ENCODE measurements at regions of chr2 and their contacts with region 1.

Region 1: DNA sequence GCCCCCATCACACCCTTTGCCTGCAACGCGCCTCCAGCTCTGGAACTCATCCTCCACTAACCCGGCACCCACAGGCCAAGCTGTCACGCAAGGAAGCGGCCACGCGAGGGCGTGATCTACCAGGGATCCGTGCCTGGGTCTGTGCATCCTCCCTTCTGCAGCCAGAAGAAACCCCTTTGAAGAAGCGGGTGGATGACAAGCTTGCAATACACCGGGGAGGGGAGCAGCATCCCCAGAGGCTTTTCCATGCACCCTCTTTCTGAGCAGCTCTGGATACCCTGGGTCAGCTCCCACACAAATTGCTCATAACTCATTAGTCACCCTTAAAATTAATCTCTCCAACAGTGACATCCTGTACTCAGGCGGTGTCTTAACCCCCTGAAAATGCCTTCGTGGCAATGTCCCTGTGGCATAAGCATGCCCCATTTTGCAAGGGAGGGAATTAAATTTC is 47.6 kb downstream of the PDCL3 start:
- DNase-seq: peak; percentile 65 to 87 (median 86)
- ATAC-seq: peak; percentile 64 to 78
- H3K4me3 ChIP-seq: no peak overlapping the region
- H3K27ac ChIP-seq: no peak overlapping the region
- H3K4me1 ChIP-seq: no peaks in the 10 kb centered on the region
- H3K27me3 ChIP-seq: no peaks in the 10 kb centered on the region

Region 2: DNA sequence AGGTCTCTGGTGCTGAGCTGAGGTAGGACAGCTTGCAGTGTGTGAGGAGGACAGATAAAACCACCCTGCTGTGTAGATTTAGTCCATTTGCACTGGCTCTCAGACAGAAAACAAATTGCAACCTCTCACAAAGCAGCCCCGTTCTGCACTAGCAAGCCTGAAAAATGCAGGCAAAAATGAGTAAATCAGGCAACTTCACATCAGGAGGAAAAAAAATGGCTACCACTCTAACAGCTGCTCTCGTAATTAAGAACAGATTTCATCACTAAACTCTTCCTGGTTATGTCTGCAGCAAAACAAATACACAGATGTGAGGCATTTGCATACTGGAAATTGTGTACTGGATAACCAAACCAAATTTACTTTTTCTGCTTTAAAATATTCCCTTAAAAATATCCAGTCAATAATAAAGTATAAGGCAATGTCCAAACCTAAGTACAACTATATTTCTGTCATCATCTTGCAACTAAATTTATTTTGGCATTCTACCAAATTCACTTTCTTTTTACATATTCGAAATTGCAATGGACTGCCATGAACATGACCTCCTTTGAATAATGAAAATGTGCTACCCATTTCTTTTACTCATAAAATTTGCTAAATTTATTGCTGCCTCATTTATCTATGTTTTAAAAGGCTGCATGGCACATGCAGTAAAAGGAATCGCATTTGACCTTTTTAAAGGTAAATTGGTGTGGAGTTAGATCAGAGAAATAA is 625.4 kb before region 1 on chr2:
- intact Hi-C with region 1: no loop called
- DNase-seq: no peak
- ATAC-seq: no peak
- H3K4me3 ChIP-seq: no peak overlapping the region
- H3K27ac ChIP-seq: no peak overlapping the region
- H3K4me1 ChIP-seq: peaks cover 3% of the 10 kb centered on the region
- H3K27me3 ChIP-seq: no peaks in the 10 kb centered on the region

Region 3: GRCh38 chr2:100365434-100365833 is 245.0 kb before region 1 on chr2:
- intact Hi-C with region 1: no loop called
- DNase-seq: no peak
- ATAC-seq: no peak
- H3K4me3 ChIP-seq: no peak overlapping the region
- H3K27ac ChIP-seq: no peak overlapping the region
- H3K4me1 ChIP-seq: no peaks in the 10 kb centered on the region
- H3K27me3 ChIP-seq: no peaks in the 10 kb centered on the region

Region 4: DNA sequence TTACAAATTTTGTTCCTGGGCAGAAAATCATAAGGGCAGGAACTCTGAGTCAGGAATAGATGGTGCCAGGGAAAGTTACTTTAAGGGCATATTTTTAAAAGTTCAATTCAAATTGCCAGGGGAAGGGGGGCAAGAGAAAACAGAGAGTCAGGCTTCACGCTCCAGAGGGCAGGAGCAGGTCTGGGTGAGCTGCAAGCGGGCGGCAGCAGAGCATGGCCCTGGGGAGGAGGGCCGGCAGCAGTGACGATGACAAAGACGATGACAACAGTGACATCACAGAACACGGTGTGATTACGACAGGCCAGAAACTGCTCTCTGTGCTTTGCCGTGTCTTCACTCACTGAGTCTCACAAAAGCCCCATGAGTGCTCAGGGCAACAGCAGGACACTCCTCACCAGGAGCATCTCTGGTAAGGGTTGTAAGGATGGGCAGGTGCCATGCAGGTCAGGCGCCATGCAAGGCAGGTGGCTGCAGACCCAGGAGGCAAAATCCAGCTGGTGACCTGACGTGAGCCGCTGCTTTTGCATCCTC is 216.2 kb before region 1 on chr2:
- intact Hi-C with region 1: no loop called
- DNase-seq: no peak
- ATAC-seq: peak in 1 of 2 donors; percentile 28
- H3K4me3 ChIP-seq: no peak overlapping the region
- H3K27ac ChIP-seq: no peak overlapping the region
- H3K4me1 ChIP-seq: no peaks in the 10 kb centered on the region
- H3K27me3 ChIP-seq: no peaks in the 10 kb centered on the region

Region 5: GRCh38 chr2:100721693-100722092 is 111.3 kb after region 1 on chr2:
- intact Hi-C with region 1: loop called in 3 of 4 experiments (anchors 10 kb)
- DNase-seq: no peak
- ATAC-seq: no peak
- H3K4me3 ChIP-seq: no peak overlapping the region
- H3K27ac ChIP-seq: no peak overlapping the region
- H3K4me1 ChIP-seq: no peaks in the 10 kb centered on the region
- H3K27me3 ChIP-seq: no peaks in the 10 kb centered on the region

Region 6: DNA sequence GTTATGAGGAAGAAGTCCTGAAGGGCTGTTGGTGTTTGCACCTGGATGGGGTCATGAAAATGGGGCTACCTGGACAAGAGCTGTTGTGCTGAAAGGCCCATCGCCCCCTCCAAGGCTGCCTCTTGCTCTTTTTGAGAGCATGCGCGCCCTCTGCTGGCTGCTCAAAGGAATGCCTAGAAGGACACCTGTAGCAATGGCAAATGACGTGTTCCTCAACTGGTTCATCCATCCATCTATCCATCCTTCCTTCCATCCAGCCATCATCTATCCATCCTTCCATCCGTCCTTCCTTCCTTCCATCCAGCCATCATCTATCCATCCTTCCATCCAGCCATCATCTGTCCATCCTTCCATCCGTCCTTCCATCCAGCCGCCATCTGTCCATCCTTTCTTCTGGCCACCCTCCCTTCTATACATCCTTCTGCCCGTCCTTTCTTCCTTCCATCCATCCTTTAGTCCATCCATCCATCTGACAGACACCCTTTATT is 374.5 kb after region 1 on chr2:
- intact Hi-C with region 1: loop called (anchors 2 to 5 kb)
- DNase-seq: peak; percentile 81 to 91 (median 91)
- ATAC-seq: peak; percentile 67 to 70
- H3K4me3 ChIP-seq: no peak overlapping the region
- H3K27ac ChIP-seq: no peak overlapping the region
- H3K4me1 ChIP-seq: peaks cover 4% of the 10 kb centered on the region
- H3K27me3 ChIP-seq: no peaks in the 10 kb centered on the region